Activated T-helper 1 cell treated with anti-CD3 and anti-CD28 coated beads, Interleukin-12 subunit alpha, Interleukin-12 subunit beta, Interleukin-2, Interleukin-4 antibody, amounts not matched to agents 30 ng/mL and 10 ng/mL and 1 ng/mL, durations not matched to agents 14 hours and 24 hours and 36 hours (primary cell): ENCODE measurements at regions of chr19 and their contacts with region 1.

Region 1: GRCh38 chr19:48363810-48364563 is at the starts of genes SYNGR4 and TMEM143:
- DNase-seq: peak; percentile 98
- H3K4me3 Mint-ChIP-seq: peak within 1 kb of the TSS; percentile 85
- H3K27ac Mint-ChIP-seq: peak within 1 kb of the TSS; percentile 87
- H3K4me1 Mint-ChIP-seq: peaks cover 6% of the 10 kb centered on the region
- H3K27me3 Mint-ChIP-seq: no peaks in the 10 kb centered on the region
- total RNA-seq, gene SYNGR4: 0.61 TPM in 1 of 2 replicates, not detected in the other
- total RNA-seq, gene TMEM143: 7.7 and 14.9 TPM in 2 replicates

Region 2: GRCh38 chr19:48170038-48170812 is 193.8 kb before region 1 on chr19 and contains the starts of genes LIG1 and ZSWIM9:
- intact Hi-C with region 1: loop called (anchors 1 kb)
- DNase-seq: peak; percentile 89
- H3K4me3 Mint-ChIP-seq: peak within 1 kb of the TSS; percentile 97
- H3K27ac Mint-ChIP-seq: peak within 1 kb of the TSS; percentile 100
- H3K4me1 Mint-ChIP-seq: peaks cover 33% of the 10 kb centered on the region
- H3K27me3 Mint-ChIP-seq: peaks cover 3% of the 10 kb centered on the region
- total RNA-seq, gene LIG1: 133 and 140 TPM in 2 replicates
- total RNA-seq, gene ZSWIM9: 8.4 and 9.5 TPM in 2 replicates

Region 3: GRCh38 chr19:48333467-48334384 is 30.3 kb before region 1 on chr19:
- intact Hi-C with region 1: loop called (anchors 1 kb)
- DNase-seq: peak; percentile 92
- H3K4me3 Mint-ChIP-seq: peak overlapping the region; percentile 95
- H3K27ac Mint-ChIP-seq: peak overlapping the region; percentile 97
- H3K4me1 Mint-ChIP-seq: peaks cover 55% of the 10 kb centered on the region
- H3K27me3 Mint-ChIP-seq: peaks cover 1% of the 10 kb centered on the region

Region 4: GRCh38 chr19:48398375-48399235 is 34.6 kb after region 1 on chr19:
- intact Hi-C with region 1: loop called (anchors 2 kb)
- DNase-seq: peak; percentile 84
- H3K4me3 Mint-ChIP-seq: peak overlapping the region; percentile 53
- H3K27ac Mint-ChIP-seq: peak overlapping the region; percentile 34
- H3K4me1 Mint-ChIP-seq: peaks cover 31% of the 10 kb centered on the region
- H3K27me3 Mint-ChIP-seq: peaks cover 39% of the 10 kb centered on the region

Region 5: DNA sequence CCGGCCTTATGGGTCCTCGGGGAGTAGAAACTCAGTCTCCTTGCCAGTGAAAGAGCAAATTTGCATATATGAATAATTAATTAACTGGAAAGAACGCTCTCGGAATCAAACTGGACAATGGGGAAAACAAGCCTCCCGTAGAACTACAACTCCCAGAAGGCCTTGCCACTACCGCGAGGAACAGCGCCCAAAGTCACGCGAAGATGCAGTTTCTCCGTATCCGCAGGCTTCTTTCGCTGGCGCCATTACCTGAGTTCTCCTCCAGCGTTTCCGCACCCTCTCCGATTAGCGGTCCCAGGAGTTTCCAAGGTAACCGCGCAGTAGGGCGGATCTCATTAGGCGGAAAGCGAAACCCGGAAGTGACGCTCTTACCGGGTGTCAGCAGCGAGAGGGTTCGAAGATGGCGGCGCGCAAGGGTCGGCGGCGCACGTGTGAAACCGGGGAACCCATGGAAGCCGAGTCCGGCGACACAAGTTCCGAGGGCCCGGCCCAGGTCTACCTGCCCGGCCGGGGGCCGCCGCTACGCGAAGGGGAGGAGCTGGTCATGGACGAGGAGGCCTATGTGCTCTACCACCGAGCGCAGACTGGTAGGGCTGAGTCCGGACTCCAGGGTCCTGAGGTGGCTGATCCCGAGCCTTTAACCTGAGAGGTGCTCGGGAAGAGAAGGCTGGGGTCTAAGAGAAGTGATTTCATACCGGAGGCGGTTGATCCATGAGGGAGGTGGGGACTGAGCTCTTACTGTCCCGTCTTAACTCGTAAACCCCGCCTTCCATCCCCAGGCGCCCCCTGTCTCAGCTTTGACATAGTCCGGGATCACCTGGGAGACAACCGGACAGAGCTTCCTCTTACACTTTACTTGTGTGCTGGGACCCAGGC is 81.9 kb after region 1 on chr19 and contains the start of gene GRWD1:
- intact Hi-C with region 1: loop called (anchors 1 kb)
- DNase-seq: peak; percentile 92
- H3K4me3 Mint-ChIP-seq: peak within 1 kb of the TSS; percentile 92
- H3K27ac Mint-ChIP-seq: peak within 1 kb of the TSS; percentile 90
- H3K4me1 Mint-ChIP-seq: peaks cover 19% of the 10 kb centered on the region
- H3K27me3 Mint-ChIP-seq: peaks cover 25% of the 10 kb centered on the region
- total RNA-seq, gene GRWD1: 96.0 and 100 TPM in 2 replicates

Region 6: GRCh38 chr19:48618916-48619691 is 255.1 kb after region 1 on chr19 and contains the starts of genes RPL18 and SPHK2:
- intact Hi-C with region 1: loop called (anchors 1 kb)
- DNase-seq: peak; percentile 94
- H3K4me3 Mint-ChIP-seq: peak within 1 kb of the TSS; percentile 99
- H3K27ac Mint-ChIP-seq: peak within 1 kb of the TSS; percentile 100
- H3K4me1 Mint-ChIP-seq: peaks cover 50% of the 10 kb centered on the region
- H3K27me3 Mint-ChIP-seq: no peaks in the 10 kb centered on the region
- total RNA-seq, gene RPL18: 1,774 and 1,780 TPM in 2 replicates
- total RNA-seq, gene SPHK2: 40.8 and 44.1 TPM in 2 replicates